Activated T-helper 2 cell treated with anti-CD3 and anti-CD28 coated beads, Interferon-gamma antibody, Interleukin-2, Interleukin-4, amounts not matched to agents 10 μg/mL and 5 μg/mL and 100 μg/mL, durations not matched to agents 14 hours and 24 hours and 36 hours (primary cell): ENCODE measurements at regions of chr3 and their contacts with region 1.

Region 1: GRCh38 chr3:24773798-24774197 is 279.1 kb upstream of the THRB start:
- DNase-seq: no peak
- H3K4me3 Mint-ChIP-seq: no peak overlapping the region
- H3K27ac Mint-ChIP-seq: no peak overlapping the region
- H3K4me1 Mint-ChIP-seq: no peaks in the 10 kb centered on the region
- H3K27me3 Mint-ChIP-seq: no peaks in the 10 kb centered on the region

Region 2: DNA sequence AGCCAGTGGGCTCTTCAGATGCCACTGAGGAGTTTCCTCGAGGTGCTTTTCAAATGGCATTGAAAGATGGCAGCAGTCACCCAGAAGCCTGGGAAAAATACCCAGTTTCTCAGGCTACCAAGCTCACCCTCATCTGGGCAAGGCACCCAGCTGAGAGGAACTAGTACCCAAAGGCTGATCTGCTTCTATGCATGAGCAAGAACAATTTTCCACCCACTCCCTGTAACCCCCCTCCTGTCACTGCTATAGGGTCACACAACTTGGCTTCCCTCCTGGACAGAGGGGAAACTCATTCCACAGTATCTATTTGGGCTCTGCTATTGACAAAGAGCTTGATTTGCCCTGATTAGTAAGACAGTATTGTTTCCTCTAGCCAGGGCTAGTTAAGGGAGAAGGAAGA is 311.1 kb before region 1 on chr3:
- intact Hi-C with region 1: no loop called
- DNase-seq: no peak
- H3K4me3 Mint-ChIP-seq: no peak overlapping the region
- H3K27ac Mint-ChIP-seq: no peak overlapping the region
- H3K4me1 Mint-ChIP-seq: no peaks in the 10 kb centered on the region
- H3K27me3 Mint-ChIP-seq: no peaks in the 10 kb centered on the region

Region 3: DNA sequence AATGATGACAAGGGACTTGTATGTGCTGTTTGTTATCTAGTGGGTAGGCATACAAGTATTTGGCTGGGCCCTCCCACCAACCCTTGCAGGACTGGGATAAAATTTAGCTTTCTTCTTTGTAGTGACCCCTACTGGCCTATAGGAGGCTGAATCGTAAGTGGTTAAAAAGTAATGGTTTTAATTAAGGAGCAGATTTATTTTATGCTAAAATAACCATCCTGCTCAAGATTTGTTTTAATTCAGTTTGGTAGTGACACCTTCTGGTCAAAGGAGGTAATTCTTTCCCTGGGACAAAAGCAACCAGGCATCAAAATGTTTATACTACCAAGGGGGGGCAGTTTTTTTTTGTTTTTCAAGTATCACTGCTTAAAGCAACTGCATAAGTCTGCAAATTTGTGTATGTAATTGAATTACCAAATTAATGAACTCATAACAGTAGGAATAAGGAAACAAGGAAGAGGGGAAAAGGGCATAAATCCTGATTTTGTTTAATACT is 820.3 kb after region 1 on chr3:
- intact Hi-C with region 1: loop called (anchors 10 kb)
- DNase-seq: no peak
- H3K4me3 Mint-ChIP-seq: no peak overlapping the region
- H3K27ac Mint-ChIP-seq: no peak overlapping the region
- H3K4me1 Mint-ChIP-seq: no peaks in the 10 kb centered on the region
- H3K27me3 Mint-ChIP-seq: no peaks in the 10 kb centered on the region